Lower leg skin (tissue), 4 donors: ENCODE measurements at regions of chr2 and their contacts with region 1.

Region 1: DNA sequence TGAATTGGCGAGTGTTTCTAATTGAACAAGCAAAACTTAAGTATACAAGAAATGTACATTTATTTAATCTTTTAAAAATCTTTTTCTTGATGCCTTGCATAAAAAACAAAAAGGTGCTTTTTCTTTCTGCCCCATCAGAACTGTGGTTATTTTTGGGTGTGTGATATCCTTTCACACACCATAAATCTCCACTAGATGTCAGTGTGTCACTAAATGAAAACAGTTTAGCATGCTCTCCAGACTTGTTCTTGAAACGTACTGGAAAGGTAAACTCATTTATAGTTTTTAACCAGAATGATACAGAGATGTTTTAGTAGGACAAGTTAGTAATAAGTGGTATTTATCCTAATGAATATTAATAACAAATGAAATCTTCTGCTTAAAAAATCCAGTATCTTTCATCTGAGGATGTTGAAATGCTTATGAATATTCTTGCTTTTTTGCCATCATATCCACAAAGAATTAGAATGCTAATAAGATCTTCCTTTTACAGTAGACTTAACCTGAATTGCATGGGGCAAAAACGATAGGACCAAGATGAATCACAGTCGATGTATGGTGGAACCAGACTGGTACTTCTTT is 96.8 kb downstream of the UBE2E3 start:
- DNase-seq: no peak
- H3K4me3 ChIP-seq: no peak overlapping the region
- CTCF ChIP-seq: no peak
- POLR2A ChIP-seq: no peak

Region 2: GRCh38 chr2:181523756-181524155 is 446.5 kb after region 1 on chr2:
- intact Hi-C with region 1: no loop called
- DNase-seq: peak in 1 of 2 donors; percentile 16
- H3K4me3 ChIP-seq: no peak overlapping the region
- CTCF ChIP-seq: no peak
- POLR2A ChIP-seq: no peak

Region 3: DNA sequence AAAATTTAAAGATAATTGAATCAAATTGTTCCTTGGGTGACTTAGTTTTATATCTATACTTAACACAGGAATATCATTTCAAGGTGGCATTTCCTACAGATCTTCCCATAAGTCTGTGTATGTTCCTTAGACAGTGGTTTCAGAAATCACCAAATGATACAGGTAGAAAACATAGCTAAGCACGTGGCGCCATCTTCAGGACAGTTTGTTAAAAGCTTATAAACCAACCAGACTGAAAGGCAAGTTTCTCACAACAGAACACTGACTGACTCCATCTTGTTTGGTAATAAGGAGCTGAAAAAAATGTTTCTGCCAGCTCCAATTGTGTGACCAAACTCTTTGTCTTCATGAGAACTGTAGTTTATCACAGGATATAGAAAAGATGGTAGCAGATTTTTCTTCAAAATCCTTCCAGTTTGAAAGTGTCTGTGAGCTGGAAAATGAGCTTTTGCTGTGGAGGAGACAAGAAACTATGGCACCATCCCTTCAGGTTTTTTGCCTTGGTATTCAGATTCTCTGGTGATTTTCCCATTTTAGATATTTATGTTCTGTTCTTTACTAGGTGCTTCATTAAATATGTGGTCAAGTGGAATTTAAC is 637.9 kb after region 1 on chr2:
- intact Hi-C with region 1: loop called (anchors 10 kb)
- DNase-seq: peak in 1 of 2 donors; percentile 62
- H3K4me3 ChIP-seq: no peak overlapping the region
- CTCF ChIP-seq: no peak
- POLR2A ChIP-seq: no peak